HCT116 (cell line): ENCODE measurements at regions of chr2 and their contacts with region 1.

Region 1: GRCh38 chr2:128178650-128179460 is 87.9 kb downstream of the UGGT1 start:
- DNase-seq: peak; percentile 10
- ATAC-seq: peak; percentile 92
- H3K4me3 ChIP-seq: no peak overlapping the region
- H3K27ac ChIP-seq: no peak overlapping the region
- H3K4me1 ChIP-seq: no peaks in the 10 kb centered on the region
- H3K27me3 ChIP-seq: no peaks in the 10 kb centered on the region
- CTCF ChIP-seq: peak; percentile 57 to 88 (median 81); a peak in 5 of 6 replicates
- POLR2A ChIP-seq: no peak
- RAD21 ChIP-seq: peak; percentile 79

Region 2: DNA sequence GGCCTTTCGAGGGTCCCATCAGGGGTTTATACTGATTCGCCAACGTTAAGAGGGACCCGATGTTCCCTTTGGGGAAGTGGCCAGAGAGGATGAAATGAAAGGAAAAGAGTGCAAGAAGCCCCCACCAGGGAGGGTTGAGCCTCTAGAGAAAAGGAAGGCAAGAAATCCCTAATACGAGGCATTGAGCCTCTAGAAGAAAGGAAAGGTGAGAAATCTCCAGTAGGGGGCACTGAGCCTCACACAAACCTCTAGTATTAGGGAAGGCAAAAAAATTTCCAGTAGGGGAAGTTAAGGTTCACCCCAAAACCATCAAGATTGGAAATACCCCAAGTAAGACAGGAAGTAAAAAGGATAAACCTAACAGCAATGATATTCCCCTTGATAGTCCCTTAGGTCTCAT is 141.2 kb before region 1 on chr2:
- CTCF ChIA-PET with region 1: no interaction called
- POLR2A ChIA-PET with region 1: no interaction called
- RAD21 ChIA-PET with region 1: no interaction called
- intact Hi-C with region 1: no loop called
- DNase-seq: no peak
- ATAC-seq: no peak
- H3K4me3 ChIP-seq: no peak overlapping the region
- H3K27ac ChIP-seq: no peak overlapping the region
- H3K4me1 ChIP-seq: no peaks in the 10 kb centered on the region
- H3K27me3 ChIP-seq: no peaks in the 10 kb centered on the region
- CTCF ChIP-seq: peak in 1 of 3 experiments; percentile 30; a peak in 2 of 6 replicates
- POLR2A ChIP-seq: no peak
- RAD21 ChIP-seq: no peak

Region 3: GRCh38 chr2:128292599-128293425 is 114.0 kb after region 1 on chr2:
- CTCF ChIA-PET with region 1: no interaction called
- POLR2A ChIA-PET with region 1: no interaction called
- RAD21 ChIA-PET with region 1: no interaction called
- intact Hi-C with region 1: no loop called
- DNase-seq: no peak
- ATAC-seq: peak; percentile 45; the same call in 1 of the 2 replicates
- H3K4me3 ChIP-seq: no peak overlapping the region
- H3K27ac ChIP-seq: no peak overlapping the region; the same call in 1 of the 2 replicates
- H3K4me1 ChIP-seq: peaks cover 0 to 12% of the 10 kb centered on the region in 2 experiments; a peak in 2 of 4 replicates
- H3K27me3 ChIP-seq: no peaks in the 10 kb centered on the region
- CTCF ChIP-seq: no peak
- POLR2A ChIP-seq: no peak
- RAD21 ChIP-seq: no peak

Region 4: GRCh38 chr2:128305159-128306087 is 126.6 kb after region 1 on chr2:
- CTCF ChIA-PET with region 1: interaction called, 3 read pairs
- POLR2A ChIA-PET with region 1: no interaction called
- RAD21 ChIA-PET with region 1: no interaction called
- intact Hi-C with region 1: loop called (anchors 5 kb)
- DNase-seq: peak; percentile 72
- ATAC-seq: peak; percentile 79
- H3K4me3 ChIP-seq: peak overlapping the region in 1 of 2 experiments; percentile 39; a peak in 2 of 4 replicates
- H3K27ac ChIP-seq: peak overlapping the region; percentile 90
- H3K4me1 ChIP-seq: peaks cover 33 to 59% of the 10 kb centered on the region in 2 experiments
- H3K27me3 ChIP-seq: no peaks in the 10 kb centered on the region
- CTCF ChIP-seq: no peak
- POLR2A ChIP-seq: no peak
- RAD21 ChIP-seq: no peak